ENCODE measurements at regions of chr3 and their contacts with region 1.

Region 1: GRCh38 chr3:117939425-117940027 is 1095.1 kb downstream of the IGSF11 start:
- DNase-seq: no peak
- ATAC-seq: no peak
- H3K4me3 ChIP-seq: no peak overlapping the region
- H3K27ac ChIP-seq: no peak overlapping the region
- H3K4me1 ChIP-seq: no peaks in the 10 kb centered on the region
- H3K27me3 ChIP-seq: no peaks in the 10 kb centered on the region
- CTCF ChIP-seq: no peak
- EP300 ChIP-seq: no peak
- POLR2A ChIP-seq: no peak
- RAD21 ChIP-seq: no peak

Region 2: DNA sequence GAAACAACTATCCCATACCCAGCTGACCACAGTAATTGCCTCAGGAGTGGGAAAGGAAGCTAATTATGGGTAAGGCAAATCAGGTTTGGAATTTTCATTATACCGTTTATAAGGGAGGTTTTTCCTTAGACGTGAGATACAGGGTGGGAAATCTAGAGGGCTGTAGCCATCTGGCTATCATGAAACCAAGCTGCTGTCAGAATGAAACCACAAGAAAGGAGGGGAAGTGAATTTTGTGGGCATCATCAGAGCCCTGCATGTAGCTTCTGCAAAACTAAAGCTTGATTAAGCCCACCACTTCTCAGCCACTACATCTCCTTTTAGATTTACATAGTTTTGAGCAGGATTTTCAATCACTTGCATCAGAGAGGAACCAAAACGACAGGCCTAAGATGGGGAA is 336.4 kb before region 1 on chr3:
- CTCF ChIA-PET with region 1: no interaction called
- POLR2A ChIA-PET with region 1: no interaction called
- in situ Hi-C with region 1: no loop called
- intact Hi-C with region 1: no loop called
- DNase-seq: no peak
- ATAC-seq: no peak
- H3K4me3 ChIP-seq: no peak overlapping the region
- H3K27ac ChIP-seq: no peak overlapping the region
- H3K4me1 ChIP-seq: no peaks in the 10 kb centered on the region
- H3K27me3 ChIP-seq: no peaks in the 10 kb centered on the region
- CTCF ChIP-seq: no peak
- EP300 ChIP-seq: no peak
- POLR2A ChIP-seq: no peak
- RAD21 ChIP-seq: no peak

Region 3: DNA sequence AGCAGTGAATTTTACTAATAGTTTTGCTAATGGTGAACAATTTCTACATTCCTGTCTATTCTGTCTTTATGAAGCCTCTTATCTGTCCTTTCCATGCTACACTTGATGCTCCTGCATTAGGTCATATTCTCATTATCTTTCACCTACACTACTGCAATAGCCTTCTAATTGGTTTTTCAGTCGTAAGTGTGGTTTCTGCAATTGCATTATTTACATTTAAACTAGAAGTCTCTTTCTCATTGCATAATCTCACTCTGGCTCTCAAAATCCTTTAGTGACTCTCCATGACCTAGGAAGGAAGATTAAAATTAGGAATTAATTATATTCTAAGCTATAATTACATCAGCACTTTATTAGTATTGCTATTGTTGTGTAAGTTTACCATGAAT is 408.6 kb after region 1 on chr3:
- CTCF ChIA-PET with region 1: no interaction called
- POLR2A ChIA-PET with region 1: no interaction called
- in situ Hi-C with region 1: no loop called
- intact Hi-C with region 1: loop called (anchors 10 kb)
- DNase-seq: no peak
- ATAC-seq: no peak
- H3K4me3 ChIP-seq: no peak overlapping the region
- H3K27ac ChIP-seq: no peak overlapping the region
- H3K4me1 ChIP-seq: peaks cover 11% of the 10 kb centered on the region; the same call in 1 of the 2 replicates
- H3K27me3 ChIP-seq: no peaks in the 10 kb centered on the region
- CTCF ChIP-seq: no peak
- EP300 ChIP-seq: no peak
- POLR2A ChIP-seq: no peak
- RAD21 ChIP-seq: no peak